ENCODE measurements at regions of chr10 and their contacts with region 1.

Region 1: DNA sequence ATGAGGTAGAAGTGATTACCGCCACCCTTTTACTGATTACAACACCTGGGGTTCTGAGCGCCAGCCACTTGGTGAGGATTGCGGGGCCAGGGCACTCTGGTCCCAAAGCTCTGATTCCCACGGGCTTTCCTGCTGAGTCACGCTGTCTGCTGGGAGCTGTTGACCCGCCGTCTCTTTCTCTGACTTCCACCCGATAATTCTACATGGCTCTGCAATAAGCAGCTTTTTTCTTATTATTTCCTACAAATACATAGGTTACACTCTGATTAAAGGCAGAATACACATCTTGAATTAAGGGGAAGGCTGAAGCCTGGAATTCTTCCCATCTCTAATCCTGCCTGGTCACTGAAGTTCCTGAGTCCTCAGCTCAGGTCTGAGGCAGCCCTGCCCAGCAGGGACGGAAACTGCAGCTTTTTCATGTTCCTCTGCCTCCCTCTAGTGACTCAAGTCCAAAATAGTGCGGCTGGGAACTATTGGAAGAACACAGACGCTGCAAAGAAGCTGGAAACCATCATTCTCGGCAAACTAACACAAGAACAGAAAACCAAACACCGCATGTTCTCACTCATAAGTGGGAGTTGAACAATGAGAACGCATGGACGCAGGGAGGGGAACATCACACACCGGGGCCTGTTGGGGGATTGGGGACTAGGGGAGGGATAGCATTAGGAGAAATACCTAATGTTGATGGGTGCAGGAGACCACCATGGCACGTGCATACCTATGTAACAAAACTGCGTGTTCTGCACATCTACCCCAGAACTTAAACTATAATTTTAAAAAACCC is 178.3 kb downstream of the PRKCQ start:
- DNase-seq: peak; percentile 72 to 77
- H3K4me3 ChIP-seq: peak overlapping the region; percentile 46; the same call in 1 of the 2 replicates
- H3K27ac ChIP-seq: peak overlapping the region; percentile 77
- H3K4me1 ChIP-seq: peaks cover 32% of the 10 kb centered on the region
- H3K27me3 ChIP-seq: no peaks in the 10 kb centered on the region
- CTCF ChIP-seq: peak; percentile 80

Region 2: GRCh38 chr10:4819707-4820106 is 1582.0 kb before region 1 on chr10:
- CTCF ChIA-PET with region 1: no interaction called
- POLR2A ChIA-PET with region 1: no interaction called
- intact Hi-C with region 1: loop called (anchors 5 kb)
- DNase-seq: no peak
- H3K4me3 ChIP-seq: no peak overlapping the region
- H3K27ac ChIP-seq: no peak overlapping the region
- H3K4me1 ChIP-seq: no peaks in the 10 kb centered on the region; the same call in 1 of the 2 replicates
- H3K27me3 ChIP-seq: no peaks in the 10 kb centered on the region
- CTCF ChIP-seq: no peak

Region 3: DNA sequence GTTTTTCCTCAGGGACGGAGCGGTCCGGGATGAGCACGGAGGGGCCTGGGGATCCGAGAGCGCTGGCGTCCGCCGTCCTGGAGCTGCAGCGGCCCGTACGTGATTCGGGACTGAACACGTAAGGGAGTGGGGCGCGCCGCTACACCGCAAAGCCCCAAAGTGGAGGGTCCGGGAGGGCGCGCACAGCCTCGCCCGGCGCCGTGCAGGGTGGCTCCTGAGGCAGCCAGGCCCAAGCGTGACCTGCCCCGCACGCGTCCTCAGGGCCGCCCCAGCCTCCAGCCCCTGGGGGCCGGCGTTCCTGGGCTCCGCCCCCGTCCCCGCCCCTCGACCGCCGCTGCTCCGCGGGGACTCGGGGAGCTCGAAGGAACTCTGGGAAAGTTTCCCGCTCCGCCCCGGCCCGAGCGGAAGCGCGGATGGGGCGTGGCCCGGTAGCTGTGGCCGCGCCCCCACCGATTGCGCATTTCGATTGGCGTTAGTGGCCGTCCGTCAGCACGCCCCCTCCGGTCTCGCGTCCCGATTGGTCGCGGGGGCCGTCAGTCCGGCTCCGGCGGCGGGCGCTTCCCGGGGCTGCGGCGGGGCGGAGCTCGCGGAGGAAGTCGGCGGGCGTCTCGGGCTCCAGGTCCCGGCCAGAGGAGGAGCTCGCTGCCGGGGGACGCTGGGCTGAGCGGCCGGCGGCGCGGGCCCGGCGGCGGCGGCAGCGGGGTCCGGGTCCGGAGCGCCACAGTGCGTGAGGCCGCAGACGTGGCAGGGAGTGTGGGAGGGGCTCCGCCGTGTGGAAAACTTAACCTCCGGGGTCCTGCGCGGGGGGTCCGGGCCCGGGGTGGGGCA is 511.9 kb before region 1 on chr10 and contains the starts of genes ANKRD16 and FBH1:
- CTCF ChIA-PET with region 1: no interaction called
- POLR2A ChIA-PET with region 1: interaction called, 3 read pairs
- intact Hi-C with region 1: loop called (anchors 5 kb)
- DNase-seq: peak; percentile 85 to 99
- H3K4me3 ChIP-seq: peak within 1 kb of the TSS; percentile 78
- H3K27ac ChIP-seq: no peak within 1 kb of the TSS
- H3K4me1 ChIP-seq: peaks cover 16% of the 10 kb centered on the region
- H3K27me3 ChIP-seq: no peaks in the 10 kb centered on the region
- CTCF ChIP-seq: no peak
- total RNA-seq, gene ANKRD16: 9.8 and 12.2 TPM in 2 replicates
- total RNA-seq, gene FBH1: 68.0 and 90.9 TPM in 2 replicates

Region 4: GRCh38 chr10:6108603-6109443 is 292.9 kb before region 1 on chr10:
- CTCF ChIA-PET with region 1: interaction called, 6 read pairs
- POLR2A ChIA-PET with region 1: no interaction called
- intact Hi-C with region 1: loop called (anchors 1 kb)
- DNase-seq: peak in 1 of 2 experiments; percentile 31
- H3K4me3 ChIP-seq: no peak overlapping the region
- H3K27ac ChIP-seq: no peak overlapping the region
- H3K4me1 ChIP-seq: peaks cover 9% of the 10 kb centered on the region; the same call in 1 of the 2 replicates
- H3K27me3 ChIP-seq: no peaks in the 10 kb centered on the region
- CTCF ChIP-seq: peak; percentile 80

Region 5: DNA sequence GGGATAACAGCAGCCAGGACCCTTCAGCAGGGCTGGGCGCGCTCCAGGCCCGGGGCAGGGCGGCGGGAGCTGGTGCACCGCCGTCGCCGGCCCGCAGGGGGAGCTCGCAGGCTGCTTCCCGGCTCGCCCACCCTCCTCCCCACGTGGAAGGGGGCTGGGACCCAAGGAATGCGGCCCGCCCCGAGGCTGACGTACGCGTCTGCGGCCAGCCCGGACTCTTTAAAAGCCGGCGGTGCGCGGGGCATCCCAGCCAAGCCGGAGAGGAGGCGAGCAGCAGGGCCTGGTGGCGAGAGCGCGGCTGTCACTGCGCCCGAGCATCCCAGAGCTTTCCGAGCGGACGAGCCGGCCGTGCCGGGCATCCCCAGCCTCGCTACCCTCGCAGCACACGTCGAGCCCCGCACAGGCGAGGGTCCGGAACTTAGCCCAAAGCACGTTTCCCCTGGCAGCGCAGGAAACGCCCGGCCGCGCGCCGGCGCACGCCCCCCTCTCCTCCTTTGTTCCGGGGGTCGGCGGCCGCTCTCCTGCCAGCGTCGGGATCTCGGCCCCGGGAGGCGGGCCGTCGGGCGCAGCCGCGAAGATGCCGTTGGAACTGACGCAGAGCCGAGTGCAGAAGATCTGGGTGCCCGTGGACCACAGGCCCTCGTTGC is 198.9 kb before region 1 on chr10 and contains the start of gene PFKFB3:
- CTCF ChIA-PET with region 1: interaction called, 34 read pairs
- POLR2A ChIA-PET with region 1: interaction called, 6 read pairs
- intact Hi-C with region 1: loop called (anchors 1 kb)
- DNase-seq: peak; percentile 73 to 96
- H3K4me3 ChIP-seq: peak within 1 kb of the TSS; percentile 90
- H3K27ac ChIP-seq: peak within 1 kb of the TSS; percentile 55
- H3K4me1 ChIP-seq: peaks cover 14% of the 10 kb centered on the region; the same call in 1 of the 2 replicates
- H3K27me3 ChIP-seq: no peaks in the 10 kb centered on the region
- CTCF ChIP-seq: peak; percentile 81
- total RNA-seq, gene PFKFB3: 37.8 and 54.7 TPM in 2 replicates

Region 6: DNA sequence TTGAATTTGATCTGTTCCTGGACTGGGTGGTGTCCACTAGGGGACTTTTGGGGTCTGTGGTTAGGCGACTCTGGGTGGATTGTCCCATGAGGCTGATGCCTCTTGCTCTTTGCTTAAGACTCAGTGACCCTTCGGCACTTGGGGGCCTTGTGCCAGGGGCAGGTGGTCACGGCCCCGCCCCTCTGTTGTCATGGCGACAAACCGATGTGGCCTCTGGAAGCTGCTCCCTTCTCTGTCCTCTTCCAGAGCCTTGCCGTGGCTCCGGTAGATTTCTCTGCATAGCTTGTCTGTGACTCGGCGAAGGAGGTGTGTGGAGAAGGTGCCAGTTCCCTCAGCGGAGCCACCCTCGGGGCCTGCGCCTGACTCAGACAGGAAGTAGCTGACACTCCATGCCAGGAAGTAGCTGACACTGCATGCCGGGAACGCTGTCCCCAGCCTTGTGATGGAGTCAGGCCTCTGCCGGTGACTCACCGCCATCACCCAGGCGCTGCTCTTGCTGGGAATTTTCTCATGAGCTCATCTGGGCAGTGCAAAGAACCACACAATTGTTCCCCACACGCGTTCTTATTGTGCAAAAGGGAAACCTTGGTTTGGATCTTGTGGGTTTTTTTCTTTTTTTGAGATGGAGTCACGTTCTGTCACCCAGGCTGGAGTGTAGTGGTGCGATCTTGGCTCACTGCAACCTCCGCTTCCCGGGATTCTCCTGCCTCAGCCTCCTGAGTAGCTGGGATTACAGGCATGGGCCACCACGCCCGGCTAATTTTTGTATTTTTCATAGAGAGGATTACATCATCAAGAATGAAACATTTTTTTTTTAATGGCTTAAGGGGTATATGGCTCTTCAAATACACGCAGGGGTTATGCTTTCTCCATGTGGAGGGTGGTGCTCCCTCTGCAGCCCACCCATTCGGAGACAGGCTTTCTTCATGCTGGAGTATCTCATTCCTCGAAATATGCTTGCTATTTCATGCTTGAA is 126.4 kb before region 1 on chr10:
- CTCF ChIA-PET with region 1: interaction called, 5 read pairs
- POLR2A ChIA-PET with region 1: no interaction called
- intact Hi-C with region 1: loop called (anchors 1 kb)
- DNase-seq: peak; percentile 94 to 97
- H3K4me3 ChIP-seq: peak overlapping the region; percentile 54
- H3K27ac ChIP-seq: peak overlapping the region; percentile 89
- H3K4me1 ChIP-seq: peaks cover 36% of the 10 kb centered on the region
- H3K27me3 ChIP-seq: no peaks in the 10 kb centered on the region
- CTCF ChIP-seq: no peak

Region 7: GRCh38 chr10:6328699-6329423 is 72.9 kb before region 1 on chr10:
- CTCF ChIA-PET with region 1: no interaction called
- POLR2A ChIA-PET with region 1: no interaction called
- intact Hi-C with region 1: no loop called
- DNase-seq: no peak
- H3K4me3 ChIP-seq: no peak overlapping the region
- H3K27ac ChIP-seq: no peak overlapping the region
- H3K4me1 ChIP-seq: no peaks in the 10 kb centered on the region
- H3K27me3 ChIP-seq: no peaks in the 10 kb centered on the region
- CTCF ChIP-seq: no peak

Measured in PC-9 (cell line).